MCF 10A (cell line): ENCODE measurements at regions of chr4 and their contacts with region 1.

Region 1: GRCh38 chr4:38160487-38161207 is 200.4 kb downstream of the PTTG2 start:
- DNase-seq: peak; percentile 96
- H3K4me3 Mint-ChIP-seq: peak overlapping the region; percentile 35
- H3K27ac Mint-ChIP-seq: peak overlapping the region; percentile 97
- H3K4me1 Mint-ChIP-seq: peaks cover 67% of the 10 kb centered on the region
- H3K27me3 Mint-ChIP-seq: no peaks in the 10 kb centered on the region
- CTCF ChIP-seq: no peak

Region 2: GRCh38 chr4:38078590-38079421 is 81.8 kb before region 1 on chr4:
- CTCF ChIA-PET with region 1: interaction called, 3 read pairs
- POLR2A ChIA-PET with region 1: interaction called, 10 read pairs
- intact Hi-C with region 1: no loop called
- DNase-seq: peak; percentile 71
- H3K4me3 Mint-ChIP-seq: peak overlapping the region; percentile 5
- H3K27ac Mint-ChIP-seq: peak overlapping the region; percentile 82
- H3K4me1 Mint-ChIP-seq: peaks cover 28% of the 10 kb centered on the region
- H3K27me3 Mint-ChIP-seq: no peaks in the 10 kb centered on the region
- CTCF ChIP-seq: no peak

Region 3: GRCh38 chr4:38132107-38132673 is 28.5 kb before region 1 on chr4:
- CTCF ChIA-PET with region 1: interaction called, 3 read pairs
- POLR2A ChIA-PET with region 1: interaction called, 11 read pairs
- intact Hi-C with region 1: loop called (anchors 2 kb)
- DNase-seq: peak; percentile 85
- H3K4me3 Mint-ChIP-seq: peak overlapping the region; percentile 25
- H3K27ac Mint-ChIP-seq: peak overlapping the region; percentile 93
- H3K4me1 Mint-ChIP-seq: peaks cover 25% of the 10 kb centered on the region
- H3K27me3 Mint-ChIP-seq: no peaks in the 10 kb centered on the region
- CTCF ChIP-seq: no peak

Region 4: GRCh38 chr4:38174801-38175200 is 14.2 kb after region 1 on chr4:
- CTCF ChIA-PET with region 1: interaction called, 16 read pairs
- POLR2A ChIA-PET with region 1: interaction called, 20 read pairs
- intact Hi-C with region 1: no loop called
- DNase-seq: no peak
- H3K4me3 Mint-ChIP-seq: no peak overlapping the region
- H3K27ac Mint-ChIP-seq: peak overlapping the region; percentile 70
- H3K4me1 Mint-ChIP-seq: peaks cover 46% of the 10 kb centered on the region
- H3K27me3 Mint-ChIP-seq: no peaks in the 10 kb centered on the region
- CTCF ChIP-seq: no peak

Region 5: DNA sequence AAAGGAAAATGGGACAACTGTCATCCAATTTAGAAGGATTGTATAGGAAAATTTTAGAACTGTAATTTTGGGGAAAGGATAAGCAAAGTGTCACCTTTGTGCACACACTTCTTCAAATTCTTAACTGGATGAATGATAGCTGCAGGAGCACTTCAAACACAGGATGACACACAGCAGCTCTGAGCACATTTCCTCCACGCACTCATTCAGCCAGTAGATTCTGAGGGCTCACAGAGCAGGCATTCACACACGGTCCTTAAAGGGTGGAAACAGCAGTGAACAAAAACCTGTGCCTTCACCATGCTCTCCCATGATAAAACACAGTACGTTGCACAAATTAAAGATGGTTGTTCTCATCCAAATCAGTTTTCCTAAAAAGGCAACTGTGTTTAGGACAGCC is 464.9 kb after region 1 on chr4:
- CTCF ChIA-PET with region 1: no interaction called
- POLR2A ChIA-PET with region 1: no interaction called
- intact Hi-C with region 1: no loop called
- DNase-seq: no peak
- H3K4me3 Mint-ChIP-seq: no peak overlapping the region
- H3K27ac Mint-ChIP-seq: no peak overlapping the region
- H3K4me1 Mint-ChIP-seq: peaks cover 7% of the 10 kb centered on the region
- H3K27me3 Mint-ChIP-seq: no peaks in the 10 kb centered on the region
- CTCF ChIP-seq: no peak